WTC11 (cell line): ENCODE measurements at regions of chr11 and their contacts with region 1.

Region 1: DNA sequence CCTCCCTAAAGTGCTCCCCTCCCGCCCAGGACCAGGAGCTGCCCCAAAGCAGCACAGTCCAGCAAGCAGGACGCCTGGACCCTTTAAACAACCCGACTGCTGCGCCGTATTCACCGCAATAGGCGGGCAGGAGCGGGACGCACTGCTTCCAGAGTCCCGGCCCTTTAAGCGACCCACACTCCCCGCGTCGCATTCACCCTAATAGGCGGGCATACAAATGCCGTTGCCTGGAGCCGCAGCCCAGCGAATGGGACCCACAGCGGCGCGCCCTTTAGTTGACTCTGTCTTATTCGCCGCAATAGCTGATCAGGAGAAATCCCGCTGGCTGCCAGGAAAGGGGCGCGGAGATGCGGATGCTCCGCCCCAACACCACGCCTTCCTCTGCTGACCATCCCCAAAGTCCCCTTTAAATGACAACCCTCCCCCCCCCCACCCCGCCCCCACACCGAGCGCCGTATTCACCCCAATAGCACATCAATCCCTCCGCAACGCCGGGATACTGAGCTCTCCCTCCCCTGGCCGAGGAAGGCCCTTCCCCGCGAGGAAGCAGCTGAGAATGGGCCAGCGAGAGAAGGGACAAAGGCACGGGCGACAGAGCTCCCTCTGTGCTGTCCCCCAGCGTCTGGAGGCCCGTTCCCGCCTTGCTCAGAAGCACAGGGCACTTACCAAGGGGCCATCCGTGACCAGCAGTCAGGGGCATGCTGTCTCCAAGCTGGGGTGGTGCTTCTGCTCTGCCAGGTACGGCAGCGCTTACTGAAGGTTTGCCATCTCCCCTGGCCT is 4.7 kb downstream of the OSBPL5 start:
- DNase-seq: peak; percentile 93
- ATAC-seq: peak; percentile 87
- H3K4me3 Mint-ChIP-seq: peak overlapping the region; percentile 66
- H3K27ac Mint-ChIP-seq: no peak overlapping the region
- H3K4me1 Mint-ChIP-seq: peaks cover 50% of the 10 kb centered on the region
- H3K27me3 Mint-ChIP-seq: peaks cover 13% of the 10 kb centered on the region
- CTCF ChIP-seq: no peak

Region 2: DNA sequence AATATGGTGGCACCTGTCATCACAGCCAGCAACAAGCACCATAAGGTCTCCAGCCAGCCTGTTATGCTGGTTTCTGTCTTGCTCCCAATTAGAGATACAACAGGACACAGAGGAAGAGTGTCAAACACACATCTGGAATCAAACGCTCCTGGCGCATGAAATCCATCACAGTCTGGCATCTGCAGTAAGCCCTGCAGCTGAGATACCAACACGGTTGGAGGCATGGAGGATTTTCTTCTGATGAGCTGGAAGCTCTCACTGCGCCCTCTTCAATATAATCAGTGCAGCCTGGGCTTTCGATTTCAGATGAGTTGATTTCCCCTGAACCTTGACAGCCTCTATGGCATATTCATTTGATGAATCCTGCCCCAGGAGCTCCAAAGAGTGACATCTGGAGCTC is 75.4 kb before region 1 on chr11:
- CTCF ChIA-PET with region 1: no interaction called
- POLR2A ChIA-PET with region 1: no interaction called
- DNase-seq: no peak
- ATAC-seq: no peak
- H3K4me3 Mint-ChIP-seq: no peak overlapping the region
- H3K27ac Mint-ChIP-seq: no peak overlapping the region
- H3K4me1 Mint-ChIP-seq: no peaks in the 10 kb centered on the region
- H3K27me3 Mint-ChIP-seq: peaks cover 6% of the 10 kb centered on the region; the same call in 1 of the 2 replicates
- CTCF ChIP-seq: no peak

Region 3: DNA sequence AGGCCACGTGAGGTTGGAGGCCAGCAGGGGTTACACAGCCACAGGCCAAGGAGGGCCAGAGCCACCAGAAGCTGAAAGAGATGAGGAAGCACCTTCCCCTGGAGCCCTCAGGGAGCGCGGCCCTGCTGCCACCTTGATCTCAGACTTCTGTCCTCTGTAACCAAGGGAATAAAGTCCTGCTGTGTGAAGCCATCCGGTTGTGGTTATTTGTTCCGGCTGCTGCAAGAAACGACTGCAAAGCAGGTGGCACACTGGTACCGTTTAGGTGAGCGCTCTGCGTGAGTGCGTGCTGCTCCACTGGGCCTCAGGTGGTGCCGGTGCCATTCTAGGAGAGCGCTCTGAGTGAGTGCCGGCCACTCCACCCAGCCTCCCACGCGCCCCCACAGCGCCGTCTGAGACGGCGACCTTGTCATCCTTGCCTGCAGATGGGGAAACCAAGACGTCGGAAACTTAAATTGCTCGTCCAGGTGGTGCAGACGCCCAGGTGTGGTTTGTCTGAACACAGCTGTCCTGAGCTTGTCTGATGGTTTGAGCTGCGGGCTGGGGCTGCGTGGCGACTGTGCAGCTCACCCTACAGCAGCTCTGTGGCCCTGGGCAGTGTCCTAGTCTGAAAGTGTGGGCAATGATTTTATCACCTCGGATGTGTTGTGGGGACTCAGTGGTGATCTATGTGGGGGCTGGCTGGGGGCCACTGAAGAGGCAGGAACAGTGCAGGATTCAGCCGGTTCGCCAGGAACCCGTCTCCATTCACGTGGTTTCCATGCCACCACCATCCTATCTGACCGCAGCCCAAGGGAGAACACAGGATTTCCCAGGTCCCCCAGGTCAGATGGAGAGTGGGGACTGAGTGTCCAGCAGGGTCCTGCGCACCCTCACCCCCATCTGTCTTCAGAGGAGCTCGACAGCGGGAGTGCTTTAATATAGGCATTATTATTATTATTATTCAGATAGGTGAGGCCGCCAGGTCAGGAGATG is 62.8 kb after region 1 on chr11:
- CTCF ChIA-PET with region 1: interaction called, 14 read pairs
- POLR2A ChIA-PET with region 1: no interaction called
- DNase-seq: no peak
- ATAC-seq: no peak
- H3K4me3 Mint-ChIP-seq: no peak overlapping the region
- H3K27ac Mint-ChIP-seq: no peak overlapping the region
- H3K4me1 Mint-ChIP-seq: peaks cover 32% of the 10 kb centered on the region
- H3K27me3 Mint-ChIP-seq: no peaks in the 10 kb centered on the region
- CTCF ChIP-seq: no peak